ENCODE measurements at regions of chr11 and their contacts with region 1.

Region 1: GRCh38 chr11:67674442-67674901 is at the start of gene ALDH3B2:
- DNase-seq: no peak
- H3K4me3 ChIP-seq: no peak within 1 kb of the TSS
- H3K27ac ChIP-seq: no peak within 1 kb of the TSS
- H3K4me1 ChIP-seq: no peaks in the 10 kb centered on the region
- H3K27me3 ChIP-seq: peaks cover 21% of the 10 kb centered on the region
- CTCF ChIP-seq: no peak
- POLR2A ChIP-seq: no peak
- total RNA-seq, gene ALDH3B2: not detected

Region 2: DNA sequence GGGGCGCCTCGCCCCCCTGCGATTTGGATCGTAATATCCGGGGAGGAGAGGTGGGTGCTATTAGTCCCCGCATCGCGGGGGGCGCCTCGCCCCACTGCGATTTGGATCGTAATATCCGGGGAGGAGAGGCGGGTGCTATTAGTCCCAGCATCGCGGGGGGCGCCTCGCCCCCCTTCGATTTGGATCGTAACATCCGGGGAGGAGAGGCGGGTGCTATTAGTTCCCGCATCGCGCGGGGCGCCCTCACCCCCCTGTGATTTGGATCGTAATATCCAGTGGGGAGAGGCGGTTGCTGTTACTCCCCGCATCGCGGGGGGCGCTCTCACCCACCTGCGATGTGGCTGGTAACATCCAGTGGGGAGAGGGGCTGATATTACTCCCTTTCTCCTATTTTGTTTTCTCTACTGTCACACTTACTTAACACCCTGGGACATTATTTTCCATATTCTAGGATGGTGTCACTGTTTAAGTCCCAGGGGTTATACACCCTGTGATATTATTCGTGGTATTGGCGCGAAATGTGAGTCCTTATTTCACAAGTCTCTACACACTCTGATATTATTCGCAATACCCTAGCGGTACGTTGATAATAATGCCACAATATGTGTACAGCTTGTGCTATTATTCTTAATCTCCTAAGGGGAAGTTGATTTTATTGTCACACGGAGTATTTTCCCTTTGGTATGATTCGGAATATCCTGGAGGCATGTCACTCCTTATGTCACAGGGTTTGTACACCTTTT is 57.7 kb after region 1 on chr11:
- intact Hi-C with region 1: loop called in 1 of 2 experiments (anchors 10 kb)
- DNase-seq: no peak
- H3K4me3 ChIP-seq: no peak overlapping the region
- H3K27ac ChIP-seq: no peak overlapping the region
- H3K4me1 ChIP-seq: no peaks in the 10 kb centered on the region
- H3K27me3 ChIP-seq: peaks cover 5% of the 10 kb centered on the region
- CTCF ChIP-seq: peak in 2 of 6 experiments; percentile 10 to 18
- POLR2A ChIP-seq: no peak

Measured in adrenal gland (tissue), 19 donors.